GM10248 (cell line): ENCODE measurements at regions of chr4 and their contacts with region 1.

Region 1: DNA sequence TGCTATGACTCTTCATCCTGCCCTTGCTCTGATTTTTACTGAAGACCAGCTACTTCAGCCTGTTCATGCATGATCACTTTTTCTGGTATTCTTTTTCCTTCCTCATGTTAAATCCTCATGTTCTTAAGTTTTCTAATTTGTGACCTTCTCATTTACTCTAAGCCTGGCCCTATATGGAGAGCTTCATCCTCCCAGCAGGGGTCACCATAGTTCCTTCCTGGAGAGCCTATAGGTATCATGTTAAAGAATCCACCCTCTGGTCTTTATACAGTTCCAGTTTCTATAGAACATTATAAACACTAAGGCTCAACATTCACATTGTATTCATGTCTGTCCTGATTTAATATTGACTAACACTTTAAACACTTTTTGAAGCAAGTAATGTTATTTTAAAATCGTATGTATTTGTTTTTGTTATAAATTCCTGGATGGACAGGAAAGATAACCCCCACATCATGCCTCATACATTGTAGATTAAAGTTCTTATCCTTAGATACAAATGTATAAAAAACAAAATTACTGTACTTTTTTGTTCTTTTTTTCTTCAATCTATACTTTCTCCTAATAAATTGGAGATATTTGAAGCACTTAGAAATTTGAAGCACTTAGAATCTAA is 53.8 kb upstream of the OTUD4 start:
- DNase-seq: peak; percentile 70
- CTCF ChIP-seq: peak; percentile 78

Region 2: DNA sequence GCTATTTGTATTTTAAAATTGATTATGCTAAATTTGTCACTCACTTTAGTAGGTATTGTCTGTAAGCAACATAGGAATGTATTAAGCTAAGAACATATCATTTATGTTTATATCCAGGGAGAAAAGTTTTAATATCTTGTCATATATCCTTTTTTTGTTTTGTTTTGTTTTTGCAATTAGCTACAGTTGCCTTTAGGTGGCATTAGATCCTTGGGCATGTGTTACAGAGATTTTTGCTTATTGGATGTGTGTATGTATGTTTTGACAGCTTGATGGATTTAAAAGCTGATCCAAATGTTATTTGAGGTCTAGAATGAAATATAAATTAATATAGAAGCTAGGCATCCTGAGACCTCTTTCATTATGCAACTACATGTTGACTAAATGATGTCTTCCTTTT is 17.7 kb before region 1 on chr4:
- CTCF ChIA-PET with region 1: interaction called, 29 read pairs
- POLR2A ChIA-PET with region 1: no interaction called
- DNase-seq: no peak
- CTCF ChIP-seq: peak; percentile 40

Region 3: GRCh38 chr4:145248971-145249370 is 14.8 kb after region 1 on chr4:
- CTCF ChIA-PET with region 1: interaction called, 14 read pairs
- POLR2A ChIA-PET with region 1: no interaction called
- DNase-seq: no peak
- CTCF ChIP-seq: no peak

Region 4: DNA sequence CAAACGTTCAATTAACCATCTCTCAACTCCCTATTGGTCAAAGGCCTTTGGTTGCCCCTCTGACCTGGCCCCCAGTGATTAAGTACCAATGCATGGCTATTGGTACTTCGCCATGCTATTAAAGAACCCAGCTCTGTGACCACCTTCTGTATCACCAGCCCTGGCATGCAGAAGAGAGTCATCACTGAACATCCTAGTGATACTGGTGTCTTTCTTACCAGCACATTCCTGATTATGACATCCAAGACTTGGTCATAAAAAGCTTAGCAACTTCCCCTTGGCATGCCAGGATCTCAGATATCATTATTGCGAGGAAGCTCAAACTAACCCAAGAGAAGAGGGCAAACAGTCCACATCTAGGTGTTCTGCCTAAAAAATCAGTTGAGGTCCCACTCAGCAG is 68.5 kb after region 1 on chr4:
- CTCF ChIA-PET with region 1: no interaction called
- POLR2A ChIA-PET with region 1: no interaction called
- DNase-seq: no peak
- CTCF ChIP-seq: no peak

Region 5: DNA sequence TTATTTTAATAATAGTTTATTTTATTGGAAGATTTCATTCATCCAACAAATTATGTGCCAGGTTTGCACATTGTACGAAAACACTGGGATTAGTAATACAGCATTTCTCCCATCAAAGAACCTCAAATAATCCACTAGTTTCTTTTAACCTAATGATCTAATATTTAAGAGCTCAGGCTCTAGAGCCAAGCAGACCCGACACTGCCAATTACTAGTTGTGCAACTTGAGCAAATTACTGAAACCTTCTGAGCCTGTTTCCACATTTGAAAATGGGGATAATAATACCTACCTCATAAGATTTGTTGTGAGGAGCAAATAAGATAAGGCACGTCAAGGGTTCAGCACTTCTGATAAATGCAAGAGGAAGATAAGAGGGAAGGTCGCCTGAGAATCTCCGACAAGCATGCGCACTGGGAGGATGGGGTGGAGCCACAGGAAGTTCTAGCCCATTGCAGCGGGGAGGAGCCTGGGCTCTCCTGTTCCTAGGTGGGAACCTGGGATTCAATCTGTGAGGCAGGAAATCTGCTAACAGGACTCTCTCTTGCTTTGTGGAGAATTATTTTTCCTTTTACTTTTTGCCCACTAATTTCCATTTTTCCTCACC is 106.0 kb after region 1 on chr4:
- CTCF ChIA-PET with region 1: no interaction called
- POLR2A ChIA-PET with region 1: no interaction called
- DNase-seq: no peak
- CTCF ChIP-seq: no peak

Region 6: GRCh38 chr4:145557720-145558119 is 323.5 kb after region 1 on chr4:
- CTCF ChIA-PET with region 1: interaction called, 58 read pairs
- POLR2A ChIA-PET with region 1: no interaction called
- DNase-seq: peak; percentile 65
- CTCF ChIP-seq: peak; percentile 82

Region 7: DNA sequence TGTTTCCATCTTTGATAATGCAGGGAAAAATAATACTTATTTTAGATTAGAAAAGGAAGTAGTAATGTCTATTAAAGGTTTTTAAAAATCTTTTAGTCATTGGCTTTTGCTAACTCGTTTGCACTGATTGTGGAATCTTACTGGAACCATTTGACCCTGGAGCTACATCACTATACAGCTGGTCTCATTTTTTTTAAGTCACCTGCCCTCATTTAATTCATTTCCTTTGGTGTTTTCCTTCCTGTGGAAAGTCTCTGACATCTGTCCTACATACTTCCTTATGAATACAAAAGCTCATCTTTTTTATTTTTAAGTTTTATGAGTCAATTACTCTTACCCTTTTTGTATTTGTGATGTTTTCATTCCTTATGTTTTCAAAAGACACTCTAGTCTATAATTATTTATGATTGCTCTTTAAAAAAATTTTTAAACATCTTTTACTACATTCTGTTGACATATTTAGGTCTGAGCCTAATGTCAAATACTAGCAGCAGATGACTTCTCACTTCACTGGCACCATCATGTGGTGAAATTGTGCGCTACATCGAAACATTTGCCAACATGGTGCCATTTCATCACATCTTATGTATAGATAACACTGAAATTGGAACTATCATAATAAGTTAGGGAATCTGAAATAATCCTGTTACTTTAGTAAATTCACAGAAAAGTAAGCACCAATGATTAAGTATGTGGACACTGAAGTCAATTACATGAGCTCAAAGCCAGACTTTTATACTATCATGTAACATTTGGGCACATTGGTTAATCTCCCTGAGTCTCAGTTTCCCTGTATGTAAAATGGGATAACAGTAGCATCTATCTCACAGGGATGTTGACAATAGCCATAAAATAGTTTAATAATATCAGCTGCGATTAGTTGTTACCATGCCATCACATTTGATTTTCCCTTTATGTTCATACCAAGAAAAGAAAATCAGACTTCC is 375.6 kb after region 1 on chr4:
- CTCF ChIA-PET with region 1: interaction called, 19 read pairs
- POLR2A ChIA-PET with region 1: no interaction called
- DNase-seq: peak; percentile 30
- CTCF ChIP-seq: peak; percentile 85

Region 8: GRCh38 chr4:145618932-145619638 is 384.9 kb after region 1 on chr4 and contains the start of gene MMAA:
- CTCF ChIA-PET with region 1: interaction called, 20 read pairs
- POLR2A ChIA-PET with region 1: no interaction called
- DNase-seq: peak; percentile 97
- CTCF ChIP-seq: peak; percentile 41

Region 9: GRCh38 chr4:146273204-146273901 is 1039.2 kb after region 1 on chr4:
- CTCF ChIA-PET with region 1: no interaction called
- POLR2A ChIA-PET with region 1: no interaction called
- DNase-seq: peak; percentile 38
- CTCF ChIP-seq: no peak